KBM-7 (cell line): ENCODE measurements at regions of chr16 and their contacts with region 1.

Region 1: DNA sequence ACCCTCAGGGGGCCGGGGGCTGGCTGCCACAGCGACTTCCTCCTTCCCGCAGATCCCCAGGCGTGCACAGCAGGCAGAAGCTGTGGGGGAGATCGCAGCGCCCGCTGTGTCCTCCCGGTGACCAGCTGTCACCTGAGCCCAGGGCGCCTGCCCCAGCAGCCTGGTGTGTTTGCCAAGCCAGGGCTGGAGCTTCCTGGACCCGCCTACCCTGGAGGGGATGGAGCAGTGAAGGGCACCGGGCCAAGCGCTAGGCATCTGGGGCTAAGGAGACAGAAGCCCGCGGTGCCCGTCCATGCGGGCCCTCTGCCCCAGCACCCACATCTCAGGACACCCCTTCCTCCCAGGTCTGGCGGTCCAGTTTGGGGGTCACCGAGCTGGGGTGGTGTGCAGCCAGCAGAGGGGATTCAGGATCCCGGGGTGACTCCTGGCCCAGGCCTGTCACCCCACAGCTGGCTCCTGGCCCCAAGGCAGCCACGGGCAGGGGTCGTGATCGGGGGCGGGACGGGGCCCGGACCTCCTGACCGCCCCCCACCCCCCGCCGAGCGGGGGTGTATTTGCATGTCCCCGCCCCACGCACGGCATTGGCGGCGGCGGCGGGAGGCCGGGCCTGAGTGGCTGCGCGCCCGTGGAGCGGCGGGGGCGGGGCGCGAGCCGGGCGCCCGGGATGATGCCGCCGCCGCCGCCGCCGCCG is at the start of gene RAB26:
- DNase-seq: peak; percentile 71

Region 2: GRCh38 chr16:2023098-2023925 is 124.8 kb before region 1 on chr16:
- in situ Hi-C with region 1: loop called (anchors 10 kb)
- DNase-seq: peak; percentile 95